ENCODE measurements at regions of chr11 and their contacts with region 1.

Region 1: GRCh38 chr11:128472128-128473089 is 114.9 kb downstream of the ETS1 start:
- DNase-seq: peak; percentile 83
- ATAC-seq: peak; percentile 67
- H3K4me3 Mint-ChIP-seq: peak overlapping the region; percentile 72
- H3K27ac Mint-ChIP-seq: peak overlapping the region; percentile 99
- H3K4me1 Mint-ChIP-seq: peaks cover 97% of the 10 kb centered on the region
- H3K27me3 Mint-ChIP-seq: no peaks in the 10 kb centered on the region

Region 2: GRCh38 chr11:128172046-128172878 is 300.1 kb before region 1 on chr11:
- CTCF ChIA-PET with region 1: interaction called, 4 read pairs
- POLR2A ChIA-PET with region 1: no interaction called
- intact Hi-C with region 1: loop called (anchors 5 kb)
- DNase-seq: peak; percentile 94
- ATAC-seq: peak; percentile 84
- H3K4me3 Mint-ChIP-seq: no peak overlapping the region
- H3K27ac Mint-ChIP-seq: no peak overlapping the region
- H3K4me1 Mint-ChIP-seq: peaks cover 22% of the 10 kb centered on the region
- H3K27me3 Mint-ChIP-seq: peaks cover 5% of the 10 kb centered on the region

Region 3: DNA sequence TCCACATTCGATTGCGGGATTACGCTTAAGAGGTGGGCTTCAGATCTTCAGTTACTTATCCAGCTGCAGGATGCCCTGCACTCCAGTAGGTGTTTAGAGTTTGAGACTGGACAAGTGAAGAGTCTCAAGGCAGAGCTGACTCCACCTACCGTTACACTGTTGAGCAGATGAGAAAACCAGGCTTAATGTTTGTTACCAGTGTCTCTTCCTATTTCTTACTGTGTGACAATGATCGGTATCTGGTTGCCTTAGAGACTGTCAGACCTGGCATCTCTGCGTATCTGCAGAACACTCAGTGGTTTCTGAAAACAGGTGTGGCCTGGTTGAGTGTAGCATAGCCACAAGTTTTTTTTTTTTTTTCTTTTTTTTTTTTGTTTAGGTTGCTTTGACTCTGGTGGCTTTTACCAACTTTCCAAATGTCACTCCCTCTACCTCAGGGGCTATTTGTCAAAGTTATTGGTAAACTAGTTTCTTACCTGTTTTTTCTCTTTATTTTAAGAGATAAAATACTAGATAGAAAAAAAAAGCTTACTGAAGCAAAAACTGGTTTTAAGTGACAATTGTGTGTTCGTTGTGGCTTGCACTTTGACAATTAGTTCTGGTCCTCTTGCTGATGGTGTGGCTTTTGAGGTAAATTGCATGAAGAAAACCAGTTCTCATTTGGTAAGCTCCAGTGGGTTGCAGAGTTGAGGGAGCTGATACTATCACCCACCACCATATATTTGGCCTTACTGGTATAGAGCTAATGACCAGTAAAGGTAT is 169.8 kb before region 1 on chr11:
- CTCF ChIA-PET with region 1: interaction called, 5 read pairs
- POLR2A ChIA-PET with region 1: interaction called, 4 read pairs
- intact Hi-C with region 1: loop called in 1 of 2 experiments (anchors 1 kb)
- DNase-seq: peak; percentile 76
- ATAC-seq: peak; percentile 88
- H3K4me3 Mint-ChIP-seq: peak overlapping the region; percentile 80
- H3K27ac Mint-ChIP-seq: peak overlapping the region; percentile 95
- H3K4me1 Mint-ChIP-seq: peaks cover 84% of the 10 kb centered on the region
- H3K27me3 Mint-ChIP-seq: no peaks in the 10 kb centered on the region

Region 4: GRCh38 chr11:128422576-128423370 is 49.6 kb before region 1 on chr11:
- CTCF ChIA-PET with region 1: interaction called, 3 read pairs
- POLR2A ChIA-PET with region 1: interaction called, 8 read pairs
- intact Hi-C with region 1: loop called in 1 of 2 experiments (anchors 1 kb)
- DNase-seq: peak; percentile 97
- ATAC-seq: peak; percentile 94
- H3K4me3 Mint-ChIP-seq: peak overlapping the region; percentile 36
- H3K27ac Mint-ChIP-seq: peak overlapping the region; percentile 82
- H3K4me1 Mint-ChIP-seq: peaks cover 53% of the 10 kb centered on the region
- H3K27me3 Mint-ChIP-seq: no peaks in the 10 kb centered on the region

Region 5: DNA sequence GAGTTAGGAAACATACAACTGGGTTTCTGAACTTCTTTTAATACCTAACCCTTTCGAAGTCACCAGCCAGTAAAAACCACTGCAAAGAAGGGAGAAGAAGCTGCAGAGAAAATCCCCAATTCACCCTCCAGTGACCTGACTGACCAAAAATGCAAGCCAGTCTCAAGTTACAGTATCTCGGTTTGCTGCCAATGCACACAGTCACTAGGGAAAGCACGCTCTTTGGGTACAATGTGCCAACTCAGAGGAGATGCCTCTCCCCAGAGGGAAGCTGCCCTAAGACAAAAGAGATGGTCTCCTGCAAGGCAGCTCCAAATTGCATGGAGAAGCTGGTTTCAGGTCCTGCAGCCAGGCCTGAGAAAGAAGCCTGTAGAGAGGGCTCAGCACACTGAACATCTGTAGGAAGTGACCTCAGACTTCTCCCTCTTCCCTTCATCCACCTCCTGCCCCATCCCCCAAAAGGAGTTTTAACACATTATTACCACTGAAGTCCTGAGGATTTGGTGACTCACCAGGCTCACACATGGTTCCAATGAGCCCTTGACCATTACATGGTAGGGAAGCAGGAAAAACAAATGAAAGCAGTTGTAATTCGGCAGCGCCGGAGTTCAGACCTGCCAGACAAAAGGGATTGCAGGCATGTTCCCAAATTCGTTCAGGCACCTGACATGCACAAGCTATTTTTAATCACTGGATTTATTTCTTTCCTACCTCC is 24.8 kb after region 1 on chr11:
- CTCF ChIA-PET with region 1: interaction called, 11 read pairs
- POLR2A ChIA-PET with region 1: interaction called, 13 read pairs
- intact Hi-C with region 1: loop called (anchors 1 kb)
- DNase-seq: peak; percentile 52
- ATAC-seq: peak; percentile 8
- H3K4me3 Mint-ChIP-seq: peak overlapping the region; percentile 70
- H3K27ac Mint-ChIP-seq: peak overlapping the region; percentile 99
- H3K4me1 Mint-ChIP-seq: peaks cover 95% of the 10 kb centered on the region
- H3K27me3 Mint-ChIP-seq: no peaks in the 10 kb centered on the region

Region 6: GRCh38 chr11:128582496-128583366 is 110.3 kb after region 1 on chr11:
- CTCF ChIA-PET with region 1: no interaction called
- POLR2A ChIA-PET with region 1: interaction called, 4 read pairs
- intact Hi-C with region 1: loop called (anchors 1 to 2 kb)
- DNase-seq: peak; percentile 37
- ATAC-seq: no peak
- H3K4me3 Mint-ChIP-seq: peak overlapping the region; percentile 48
- H3K27ac Mint-ChIP-seq: peak overlapping the region; percentile 75
- H3K4me1 Mint-ChIP-seq: peaks cover 61% of the 10 kb centered on the region
- H3K27me3 Mint-ChIP-seq: peaks cover 2% of the 10 kb centered on the region

Region 7: GRCh38 chr11:128705124-128705920 is 232.9 kb after region 1 on chr11:
- CTCF ChIA-PET with region 1: no interaction called
- POLR2A ChIA-PET with region 1: no interaction called
- intact Hi-C with region 1: no loop called
- DNase-seq: no peak
- ATAC-seq: no peak
- H3K4me3 Mint-ChIP-seq: no peak overlapping the region
- H3K27ac Mint-ChIP-seq: peak overlapping the region; percentile 75
- H3K4me1 Mint-ChIP-seq: peaks cover 97% of the 10 kb centered on the region
- H3K27me3 Mint-ChIP-seq: no peaks in the 10 kb centered on the region